ENCODE measurements at regions of chr1 and their contacts with region 1.

Region 1: DNA sequence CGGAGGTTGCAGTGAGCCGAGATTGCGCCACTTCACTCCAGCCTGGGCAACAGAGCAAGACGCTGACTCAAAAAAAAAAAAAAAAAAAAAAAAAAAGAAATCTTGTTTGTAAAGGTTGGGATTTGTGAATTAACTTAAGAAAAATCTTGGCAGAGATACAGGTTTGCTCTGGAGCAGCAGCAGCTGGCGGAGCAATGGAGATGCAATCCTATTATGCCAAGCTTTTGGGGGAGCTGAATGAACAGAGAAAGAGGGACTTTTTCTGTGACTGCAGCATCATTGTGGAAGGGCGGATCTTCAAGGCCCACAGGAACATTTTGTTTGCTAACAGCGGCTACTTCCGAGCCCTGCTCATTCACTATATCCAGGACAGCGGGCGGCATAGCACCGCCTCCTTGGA is 5.6 kb downstream of the ZBTB8B start:
- DNase-seq: no peak
- ATAC-seq: no peak
- H3K4me3 ChIP-seq: no peak overlapping the region
- H3K27ac ChIP-seq: no peak overlapping the region
- H3K4me1 ChIP-seq: peaks cover 3% of the 10 kb centered on the region; the same call in 1 of the 2 replicates
- H3K27me3 ChIP-seq: no peaks in the 10 kb centered on the region
- CTCF ChIP-seq: no peak

Region 2: GRCh38 chr1:32549616-32550015 is 79.2 kb after region 1 on chr1:
- CTCF ChIA-PET with region 1: interaction called, 11 read pairs
- POLR2A ChIA-PET with region 1: no interaction called
- intact Hi-C with region 1: no loop called
- DNase-seq: no peak
- ATAC-seq: no peak
- H3K4me3 ChIP-seq: no peak overlapping the region
- H3K27ac ChIP-seq: no peak overlapping the region
- H3K4me1 ChIP-seq: no peaks in the 10 kb centered on the region
- H3K27me3 ChIP-seq: no peaks in the 10 kb centered on the region
- CTCF ChIP-seq: no peak

Measured in PC-3 (cell line).